ENCODE measurements at regions of chr10 and their contacts with region 1.

Region 1: GRCh38 chr10:93893646-93894515 is at the start of gene SLC35G1:
- DNase-seq: peak; percentile 54
- ATAC-seq: peak; percentile 97
- H3K4me3 ChIP-seq: peak within 1 kb of the TSS; percentile 72
- H3K27ac ChIP-seq: peak within 1 kb of the TSS; percentile 73
- H3K4me1 ChIP-seq: peaks cover 5% of the 10 kb centered on the region; the same call in 1 of the 2 replicates
- H3K27me3 ChIP-seq: peaks cover 8% of the 10 kb centered on the region
- CTCF ChIP-seq: no peak
- POLR2A ChIP-seq: peak; percentile 43; the same call in 1 of the 2 replicates
- RAD21 ChIP-seq: 0 out of 2 replicates have a peak, but pooled peaks have one; percentile 1
- total RNA-seq, gene SLC35G1: 2.7 and 3.9 TPM in 2 replicates

Region 2: DNA sequence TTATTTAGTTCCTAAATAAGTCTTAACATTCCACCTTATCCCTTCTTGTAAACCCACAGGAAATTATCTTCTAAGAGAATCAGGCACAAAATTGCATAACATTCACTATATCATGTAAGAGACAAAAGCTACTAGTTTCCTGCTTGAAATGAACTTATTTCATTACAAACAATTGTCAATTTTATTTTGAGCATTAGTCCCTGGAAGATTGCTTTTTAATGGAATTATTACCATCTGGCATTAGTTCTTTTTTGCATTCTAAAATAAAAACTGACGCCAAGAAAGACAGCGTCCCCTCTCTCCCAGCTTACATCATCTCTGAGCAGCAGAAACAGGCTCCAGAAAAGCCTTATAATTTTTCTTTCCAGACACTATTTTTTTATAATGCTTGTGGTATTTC is 347.0 kb after region 1 on chr10:
- CTCF ChIA-PET with region 1: no interaction called
- POLR2A ChIA-PET with region 1: interaction called, 15 read pairs
- dilution Hi-C with region 1: no loop called
- in situ Hi-C with region 1: no loop called
- intact Hi-C with region 1: no loop called
- DNase-seq: no peak
- ATAC-seq: no peak
- H3K4me3 ChIP-seq: no peak overlapping the region
- H3K27ac ChIP-seq: no peak overlapping the region
- H3K4me1 ChIP-seq: no peaks in the 10 kb centered on the region
- H3K27me3 ChIP-seq: no peaks in the 10 kb centered on the region
- CTCF ChIP-seq: no peak
- POLR2A ChIP-seq: no peak
- RAD21 ChIP-seq: no peak